BJ (cell line): ENCODE measurements at regions of chr2 and their contacts with region 1.

Region 1: GRCh38 chr2:44075541-44075940 is 79.8 kb upstream of the LRPPRC start:
- DNase-seq: peak; percentile 22
- H3K4me3 ChIP-seq: no peak overlapping the region
- H3K27me3 ChIP-seq: no peaks in the 10 kb centered on the region
- CTCF ChIP-seq: no peak

Region 2: DNA sequence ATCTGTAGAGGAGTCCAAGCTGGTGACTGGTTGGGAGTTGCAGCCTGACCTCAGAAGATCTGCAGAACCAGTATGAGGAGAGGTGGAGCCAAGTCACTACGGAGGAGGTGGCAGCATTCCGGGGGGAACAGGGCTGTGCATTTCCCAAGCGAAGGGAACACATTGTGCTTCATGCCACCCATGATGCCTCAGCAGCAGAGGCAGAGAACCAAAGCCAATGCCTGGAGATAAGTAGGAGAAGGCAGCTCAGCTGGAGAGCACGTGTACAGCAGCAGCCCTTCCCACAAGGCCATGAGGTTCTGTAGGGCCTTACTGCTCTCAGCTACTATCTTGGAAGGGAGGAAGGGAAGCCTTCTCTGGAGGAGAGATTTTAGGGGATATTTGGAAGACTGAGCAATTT is 12.5 kb before region 1 on chr2:
- CTCF ChIA-PET with region 1: interaction called, 12 read pairs
- POLR2A ChIA-PET with region 1: no interaction called
- DNase-seq: no peak
- H3K4me3 ChIP-seq: no peak overlapping the region
- H3K27me3 ChIP-seq: peaks cover 3% of the 10 kb centered on the region
- CTCF ChIP-seq: no peak